Right cardiac atrium (tissue), 5 donors: ENCODE measurements at regions of chr20 and their contacts with region 1.

Region 1: DNA sequence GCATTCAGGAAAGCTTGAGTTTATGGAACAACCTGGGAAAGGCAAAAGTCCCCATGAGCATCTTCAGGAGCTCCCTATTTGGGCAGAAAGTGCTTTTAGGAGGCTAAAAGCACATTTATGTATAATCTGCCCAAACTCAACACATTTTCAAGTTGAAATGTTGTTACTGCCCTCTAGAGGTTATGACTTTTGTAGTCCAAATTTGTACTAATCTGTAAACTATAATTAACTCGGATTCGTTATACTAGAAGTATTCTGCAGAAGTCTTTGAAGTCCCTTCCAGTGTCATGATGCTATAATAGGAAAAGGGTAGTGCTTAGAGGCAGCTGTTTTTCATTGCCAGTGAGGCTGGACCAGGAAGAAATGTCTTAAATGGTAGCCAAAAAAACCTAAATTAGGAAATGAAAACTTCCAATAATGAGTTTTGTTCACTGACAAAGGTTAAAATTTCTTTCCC is 44.8 kb upstream of the EMILIN3 start:
- DNase-seq: no peak
- ATAC-seq: peak; percentile 40 to 55
- H3K4me3 ChIP-seq: no peak overlapping the region
- H3K27ac ChIP-seq: no peak overlapping the region
- H3K4me1 ChIP-seq: peaks cover 2% of the 10 kb centered on the region
- H3K27me3 ChIP-seq: no peaks in the 10 kb centered on the region

Region 2: GRCh38 chr20:41173161-41173721 is 238.2 kb before region 1 on chr20:
- intact Hi-C with region 1: loop called in 1 of 4 experiments (anchors 10 kb)
- DNase-seq: peak; percentile 88 to 95 (median 95)
- ATAC-seq: peak; percentile 86 to 90
- H3K4me3 ChIP-seq: no peak overlapping the region
- H3K27ac ChIP-seq: peak overlapping the region; percentile 40
- H3K4me1 ChIP-seq: peaks cover 22% of the 10 kb centered on the region
- H3K27me3 ChIP-seq: no peaks in the 10 kb centered on the region

Region 3: GRCh38 chr20:41205313-41205712 is 206.1 kb before region 1 on chr20:
- intact Hi-C with region 1: no loop called
- DNase-seq: peak in 2 of 3 donors; percentile 37 to 74
- ATAC-seq: peak; percentile 45 to 67
- H3K4me3 ChIP-seq: no peak overlapping the region
- H3K27ac ChIP-seq: peak overlapping the region; percentile 76
- H3K4me1 ChIP-seq: peaks cover 6% of the 10 kb centered on the region
- H3K27me3 ChIP-seq: no peaks in the 10 kb centered on the region

Region 4: GRCh38 chr20:41361757-41362747 is 49.4 kb before region 1 on chr20:
- intact Hi-C with region 1: loop called in 2 of 4 experiments (anchors 5 kb)
- DNase-seq: peak in 2 of 3 donors; percentile 74 to 78
- ATAC-seq: peak; percentile 1 to 8
- H3K4me3 ChIP-seq: no peak overlapping the region
- H3K27ac ChIP-seq: no peak overlapping the region
- H3K4me1 ChIP-seq: no peaks in the 10 kb centered on the region
- H3K27me3 ChIP-seq: no peaks in the 10 kb centered on the region

Region 5: GRCh38 chr20:41848201-41848600 is 436.8 kb after region 1 on chr20:
- intact Hi-C with region 1: no loop called
- DNase-seq: no peak
- ATAC-seq: no peak
- H3K4me3 ChIP-seq: no peak overlapping the region
- H3K27ac ChIP-seq: no peak overlapping the region
- H3K4me1 ChIP-seq: no peaks in the 10 kb centered on the region
- H3K27me3 ChIP-seq: no peaks in the 10 kb centered on the region